ENCODE measurements at regions of chr9 and their contacts with region 1.

Region 1: DNA sequence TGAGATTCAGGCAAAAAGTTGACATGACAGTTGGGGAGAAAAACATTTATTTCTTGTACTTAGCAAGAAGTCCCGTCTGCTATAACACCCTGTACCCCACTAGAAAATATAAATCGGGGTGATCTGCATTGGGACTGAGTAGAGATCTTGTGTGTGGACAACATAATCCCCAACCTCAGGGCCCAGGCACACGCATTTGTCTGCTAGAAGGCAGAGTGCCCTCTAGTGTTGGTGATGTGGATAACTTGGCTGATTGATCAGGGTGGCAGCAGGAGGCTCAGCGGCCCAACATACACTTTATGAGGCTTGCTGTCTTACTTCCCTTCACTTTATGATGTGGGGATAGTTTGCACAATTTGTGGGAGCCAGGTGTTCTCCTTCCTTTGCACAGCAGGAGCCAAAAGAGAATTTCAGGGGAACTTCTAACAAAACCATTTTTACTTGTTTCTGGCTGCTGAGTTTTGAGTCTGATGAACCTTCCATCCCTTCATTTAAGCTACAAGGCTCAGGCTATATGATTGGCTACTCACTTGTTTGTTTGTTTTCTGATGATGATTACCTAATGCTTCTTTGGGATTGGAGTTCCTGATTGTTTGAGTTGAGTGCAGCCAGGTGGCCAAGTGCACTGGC is 263.2 kb downstream of the DMAC1 start:
- DNase-seq: peak; percentile 38
- H3K4me3 Mint-ChIP-seq: no peak overlapping the region
- H3K27ac Mint-ChIP-seq: no peak overlapping the region
- H3K4me1 Mint-ChIP-seq: no peaks in the 10 kb centered on the region
- H3K27me3 Mint-ChIP-seq: peaks cover 50% of the 10 kb centered on the region
- CTCF ChIP-seq: peak; percentile 37

Region 2: GRCh38 chr9:6907772-6908381 is 628.5 kb before region 1 on chr9:
- CTCF ChIA-PET with region 1: no interaction called
- intact Hi-C with region 1: loop called (anchors 2 kb)
- DNase-seq: no peak
- H3K4me3 Mint-ChIP-seq: no peak overlapping the region
- H3K27ac Mint-ChIP-seq: no peak overlapping the region
- H3K4me1 Mint-ChIP-seq: peaks cover under 1% of the 10 kb centered on the region
- H3K27me3 Mint-ChIP-seq: no peaks in the 10 kb centered on the region
- CTCF ChIP-seq: peak; percentile 21

Region 3: GRCh38 chr9:7053903-7054302 is 482.5 kb before region 1 on chr9:
- CTCF ChIA-PET with region 1: no interaction called
- intact Hi-C with region 1: loop called (anchors 5 kb)
- DNase-seq: no peak
- H3K4me3 Mint-ChIP-seq: no peak overlapping the region
- H3K27ac Mint-ChIP-seq: no peak overlapping the region
- H3K4me1 Mint-ChIP-seq: no peaks in the 10 kb centered on the region
- H3K27me3 Mint-ChIP-seq: no peaks in the 10 kb centered on the region
- CTCF ChIP-seq: no peak

Region 4: GRCh38 chr9:7402334-7403027 is 133.9 kb before region 1 on chr9:
- CTCF ChIA-PET with region 1: no interaction called
- intact Hi-C with region 1: loop called (anchors 5 kb)
- DNase-seq: no peak
- H3K4me3 Mint-ChIP-seq: no peak overlapping the region
- H3K27ac Mint-ChIP-seq: no peak overlapping the region
- H3K4me1 Mint-ChIP-seq: no peaks in the 10 kb centered on the region
- H3K27me3 Mint-ChIP-seq: peaks cover 41% of the 10 kb centered on the region
- CTCF ChIP-seq: no peak

Region 5: DNA sequence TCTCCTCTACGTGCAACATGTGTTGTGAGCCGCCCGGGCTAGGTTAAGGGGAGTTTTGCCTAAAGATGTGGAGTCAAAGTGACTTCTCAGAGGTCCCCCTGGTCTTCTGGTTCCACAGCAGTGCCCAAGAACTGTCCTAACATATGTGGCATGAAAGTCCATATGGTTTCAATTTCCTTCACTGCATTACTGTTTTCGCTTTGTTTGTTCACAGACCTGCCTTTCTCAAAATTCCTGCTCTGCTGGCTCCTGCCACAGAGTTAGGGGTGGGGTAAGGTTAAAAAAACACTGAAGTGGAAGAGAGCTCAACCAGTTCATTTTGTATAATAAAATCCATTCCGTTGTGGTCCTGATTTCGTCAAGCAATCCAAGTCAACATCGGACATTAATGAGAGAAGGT is 26.2 kb before region 1 on chr9:
- CTCF ChIA-PET with region 1: no interaction called
- intact Hi-C with region 1: no loop called
- DNase-seq: no peak
- H3K4me3 Mint-ChIP-seq: no peak overlapping the region
- H3K27ac Mint-ChIP-seq: no peak overlapping the region
- H3K4me1 Mint-ChIP-seq: no peaks in the 10 kb centered on the region
- H3K27me3 Mint-ChIP-seq: peaks cover 21% of the 10 kb centered on the region
- CTCF ChIP-seq: no peak

Region 6: DNA sequence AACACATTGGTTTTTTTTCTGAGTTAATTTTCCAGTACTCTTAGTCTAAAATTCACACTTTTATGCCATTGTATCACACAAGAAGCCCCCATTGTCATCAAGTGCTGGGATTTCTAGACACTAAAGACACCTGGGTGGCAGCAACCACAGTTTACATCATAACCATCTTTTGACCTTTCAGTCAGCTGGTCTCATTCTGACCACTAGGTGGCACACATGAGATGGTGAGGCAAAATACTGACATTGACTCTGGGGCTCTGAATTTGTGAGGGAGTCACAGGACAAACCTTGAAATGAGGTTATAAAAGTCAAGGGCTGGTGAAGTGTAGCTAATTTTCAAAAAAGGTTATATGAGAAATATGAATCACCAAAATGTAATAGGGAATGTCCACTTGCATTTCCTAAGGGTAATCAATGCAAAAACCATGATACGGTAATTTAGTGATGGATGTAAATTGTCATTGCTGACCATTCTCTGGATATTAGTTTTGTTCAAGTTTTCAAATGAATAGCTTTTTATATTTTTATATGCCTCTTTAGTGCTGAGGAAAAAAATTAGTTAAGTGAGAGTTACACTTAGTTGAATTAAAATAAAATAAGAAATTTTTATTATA is 33.8 kb after region 1 on chr9:
- CTCF ChIA-PET with region 1: no interaction called
- intact Hi-C with region 1: no loop called
- DNase-seq: peak; percentile 49
- H3K4me3 Mint-ChIP-seq: no peak overlapping the region
- H3K27ac Mint-ChIP-seq: no peak overlapping the region
- H3K4me1 Mint-ChIP-seq: no peaks in the 10 kb centered on the region
- H3K27me3 Mint-ChIP-seq: peaks cover 26% of the 10 kb centered on the region
- CTCF ChIP-seq: peak; percentile 57

Measured in Calu3 (cell line).